Tibial artery (tissue), 4 donors: ENCODE measurements at regions of chr15 and their contacts with region 1.

Region 1: GRCh38 chr15:80970018-80970658 is 19.5 kb downstream of the MESD start:
- DNase-seq: no peak
- H3K4me3 ChIP-seq: no peak overlapping the region
- H3K27ac ChIP-seq: no peak overlapping the region
- H3K4me1 ChIP-seq: peaks cover 0 to 11% (median 0%) of the 10 kb centered on the region in 4 donors
- H3K27me3 ChIP-seq: no peaks in the 10 kb centered on the region
- CTCF ChIP-seq: peak; percentile 80 to 88

Region 2: GRCh38 chr15:80455668-80456442 is 514.3 kb before region 1 on chr15:
- intact Hi-C with region 1: loop called (anchors 10 kb)
- DNase-seq: peak in 1 of 2 donors; percentile 40
- H3K4me3 ChIP-seq: no peak overlapping the region
- H3K27ac ChIP-seq: no peak overlapping the region
- H3K4me1 ChIP-seq: peaks cover 0 to 11% (median 3%) of the 10 kb centered on the region in 4 donors
- H3K27me3 ChIP-seq: no peaks in the 10 kb centered on the region
- CTCF ChIP-seq: peak; percentile 92 to 95

Region 3: GRCh38 chr15:80567721-80568157 is 402.4 kb before region 1 on chr15:
- intact Hi-C with region 1: loop called (anchors 5 kb)
- DNase-seq: peak in 1 of 2 donors; percentile 56
- H3K4me3 ChIP-seq: no peak overlapping the region
- H3K27ac ChIP-seq: no peak overlapping the region
- H3K4me1 ChIP-seq: peaks cover 0 to 5% (median 0%) of the 10 kb centered on the region in 4 donors
- H3K27me3 ChIP-seq: no peaks in the 10 kb centered on the region
- CTCF ChIP-seq: peak; percentile 61 to 66

Region 4: DNA sequence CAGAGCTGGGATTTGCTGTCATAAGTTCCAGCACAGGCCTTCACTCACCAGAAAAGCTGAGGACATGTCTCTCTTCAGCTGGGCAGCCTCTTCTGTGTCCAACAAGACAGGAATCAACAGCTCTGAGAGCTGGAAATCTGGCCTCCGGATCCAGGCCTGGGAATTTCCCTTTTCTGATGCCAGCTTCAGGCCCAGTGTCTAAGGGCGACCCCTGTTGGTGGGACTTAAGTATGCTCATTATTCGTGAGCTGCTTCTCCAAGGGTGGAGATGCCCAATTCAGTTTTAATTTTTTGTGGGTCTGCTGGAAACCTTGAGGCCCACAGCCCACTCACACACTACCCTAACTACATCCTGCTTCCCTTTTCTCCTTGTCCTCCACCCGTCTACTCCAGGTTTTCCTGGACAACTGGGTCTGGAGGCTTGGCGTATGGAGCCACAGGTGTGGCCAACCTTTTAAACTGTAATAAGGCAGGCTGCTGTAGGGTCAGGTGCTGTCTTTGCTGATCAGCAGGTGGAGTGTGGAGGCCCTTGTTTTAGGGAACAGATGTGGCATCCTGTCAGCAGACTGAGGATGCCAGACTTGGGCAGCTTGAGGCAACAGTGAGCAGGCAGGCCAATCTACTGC is 193.6 kb before region 1 on chr15:
- intact Hi-C with region 1: loop called (anchors 5 kb)
- DNase-seq: peak; percentile 58 to 76
- H3K4me3 ChIP-seq: no peak overlapping the region
- H3K27ac ChIP-seq: no peak overlapping the region
- H3K4me1 ChIP-seq: peaks cover 0 to 34% (median 23%) of the 10 kb centered on the region in 4 donors
- H3K27me3 ChIP-seq: peaks cover 0 to 40% of the 10 kb centered on the region in 2 donors
- CTCF ChIP-seq: peak; percentile 71 to 75

Region 5: DNA sequence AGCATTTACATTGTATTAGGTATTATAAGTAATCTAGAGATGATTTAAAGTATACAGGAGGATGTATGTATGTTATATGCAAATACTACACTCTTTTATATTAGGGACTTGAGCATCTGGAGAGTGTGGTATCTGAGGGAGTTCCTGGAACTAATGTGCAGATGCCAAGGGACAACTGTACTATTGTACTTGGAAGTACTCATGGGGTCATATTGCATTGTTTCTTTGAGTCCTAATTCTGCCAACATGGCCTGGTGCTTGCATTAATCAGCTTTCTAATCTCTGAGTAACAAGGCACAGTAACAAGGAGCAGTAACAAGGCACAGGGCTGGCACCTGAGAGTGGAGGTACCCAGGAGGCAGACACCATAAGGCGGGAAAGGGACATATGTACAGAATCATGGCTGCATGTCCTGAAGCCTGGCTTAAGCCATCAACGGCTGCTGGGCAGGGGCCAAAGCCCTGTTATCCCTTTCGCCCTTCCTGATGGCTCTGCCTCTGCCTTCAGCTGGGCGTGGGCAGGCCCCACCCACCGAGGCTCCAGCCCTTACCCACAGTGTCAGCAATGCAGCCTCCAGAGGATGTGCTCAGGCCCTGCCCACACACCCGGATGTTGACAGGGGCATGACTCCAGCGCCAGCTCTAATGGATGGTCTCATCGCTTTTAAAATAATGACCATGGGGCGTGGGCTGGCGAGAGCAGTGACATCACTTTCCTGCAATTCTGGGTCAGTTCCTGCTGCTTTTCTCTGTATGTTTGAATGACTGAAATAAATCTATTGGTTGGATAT is 168.1 kb before region 1 on chr15:
- intact Hi-C with region 1: loop called (anchors 2 kb)
- DNase-seq: no peak
- H3K4me3 ChIP-seq: no peak overlapping the region
- H3K27ac ChIP-seq: no peak overlapping the region
- H3K4me1 ChIP-seq: no peaks in the 10 kb centered on the region
- H3K27me3 ChIP-seq: no peaks in the 10 kb centered on the region
- CTCF ChIP-seq: no peak

Region 6: GRCh38 chr15:81000624-81001151 is 30.6 kb after region 1 on chr15 and contains the start of gene TLNRD1:
- intact Hi-C with region 1: loop called (anchors 1 kb)
- DNase-seq: peak; percentile 87 to 94
- H3K4me3 ChIP-seq: peak within 1 kb of the TSS; percentile 65 to 92
- H3K27ac ChIP-seq: peak within 1 kb of the TSS; percentile 84 to 92
- H3K4me1 ChIP-seq: peaks cover 0 to 33% (median 30%) of the 10 kb centered on the region in 4 donors
- H3K27me3 ChIP-seq: no peaks in the 10 kb centered on the region
- CTCF ChIP-seq: no peak